ENCODE measurements at regions of chr10 and their contacts with region 1.

Region 1: DNA sequence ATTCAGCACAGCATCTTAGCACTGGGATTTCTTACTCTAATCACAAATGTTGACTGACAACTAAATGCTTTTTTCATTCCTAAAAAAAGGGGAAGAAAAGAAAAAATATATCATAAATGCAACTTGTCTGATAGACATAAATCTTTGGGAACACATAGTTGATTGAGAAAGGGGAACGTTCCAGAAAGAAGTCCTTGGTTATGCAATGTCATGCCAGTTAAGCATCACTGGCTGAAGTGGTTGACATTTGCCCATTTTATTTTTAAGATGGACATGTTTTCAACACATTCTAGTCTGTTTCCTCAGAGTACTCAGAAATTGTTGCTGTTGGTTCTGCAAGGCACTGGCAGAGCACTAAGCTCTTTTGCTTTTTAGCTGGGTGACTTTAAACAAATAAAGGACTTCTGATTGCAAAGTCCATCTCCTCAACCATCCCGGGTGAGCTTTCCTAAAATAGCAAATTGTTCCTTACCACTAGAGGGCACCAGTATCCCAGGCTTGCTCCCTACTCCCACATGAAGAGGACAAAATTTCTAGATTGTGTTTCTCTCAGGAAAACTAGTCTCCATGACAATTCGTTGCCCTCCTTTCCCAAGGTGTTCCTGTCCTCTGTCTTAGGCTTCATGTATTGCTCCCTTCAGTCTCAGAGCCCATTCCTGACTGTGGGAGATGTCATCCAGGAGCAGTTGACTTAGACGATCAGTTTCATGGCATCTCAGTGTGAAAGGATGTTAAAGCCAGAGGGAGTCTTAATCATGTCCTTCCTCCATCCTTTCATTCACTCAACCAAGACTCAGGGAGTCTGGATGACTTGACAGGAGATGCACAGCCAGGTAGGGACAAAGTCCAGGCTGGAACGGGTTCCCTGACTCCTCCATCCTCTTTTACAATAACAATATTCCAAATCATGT is 23.9 kb downstream of the OPALIN start:
- DNase-seq: peak; percentile 50
- H3K4me3 ChIP-seq: no peak overlapping the region
- H3K27ac ChIP-seq: no peak overlapping the region
- H3K4me1 ChIP-seq: no peaks in the 10 kb centered on the region
- H3K27me3 ChIP-seq: peaks cover 0 to 6% of the 10 kb centered on the region in 2 experiments
- CTCF ChIP-seq: peak; percentile 68 to 74
- POLR2A ChIP-seq: no peak

Region 2: GRCh38 chr10:96216775-96217174 is 118.1 kb before region 1 on chr10:
- CTCF ChIA-PET with region 1: no interaction called
- POLR2A ChIA-PET with region 1: no interaction called
- dilution Hi-C with region 1: no loop called
- intact Hi-C with region 1: no loop called
- DNase-seq: no peak
- H3K4me3 ChIP-seq: no peak overlapping the region
- H3K27ac ChIP-seq: no peak overlapping the region
- H3K4me1 ChIP-seq: no peaks in the 10 kb centered on the region
- H3K27me3 ChIP-seq: peaks cover 0 to 2% of the 10 kb centered on the region in 2 experiments
- CTCF ChIP-seq: no peak
- POLR2A ChIP-seq: no peak

Region 3: GRCh38 chr10:96301616-96302015 is 33.3 kb before region 1 on chr10:
- CTCF ChIA-PET with region 1: interaction called, 12 read pairs
- POLR2A ChIA-PET with region 1: no interaction called
- dilution Hi-C with region 1: no loop called
- intact Hi-C with region 1: no loop called
- DNase-seq: no peak
- H3K4me3 ChIP-seq: no peak overlapping the region
- H3K27ac ChIP-seq: no peak overlapping the region
- H3K4me1 ChIP-seq: no peaks in the 10 kb centered on the region
- H3K27me3 ChIP-seq: peaks cover 2 to 9% of the 10 kb centered on the region in 2 experiments
- CTCF ChIP-seq: no peak
- POLR2A ChIP-seq: no peak

Region 4: GRCh38 chr10:96324447-96324846 is 10.4 kb before region 1 on chr10:
- CTCF ChIA-PET with region 1: interaction called, 10 read pairs
- POLR2A ChIA-PET with region 1: no interaction called
- dilution Hi-C with region 1: no loop called
- intact Hi-C with region 1: no loop called
- DNase-seq: no peak
- H3K4me3 ChIP-seq: no peak overlapping the region
- H3K27ac ChIP-seq: no peak overlapping the region
- H3K4me1 ChIP-seq: no peaks in the 10 kb centered on the region
- H3K27me3 ChIP-seq: no peaks in the 10 kb centered on the region
- CTCF ChIP-seq: no peak
- POLR2A ChIP-seq: no peak

Region 5: DNA sequence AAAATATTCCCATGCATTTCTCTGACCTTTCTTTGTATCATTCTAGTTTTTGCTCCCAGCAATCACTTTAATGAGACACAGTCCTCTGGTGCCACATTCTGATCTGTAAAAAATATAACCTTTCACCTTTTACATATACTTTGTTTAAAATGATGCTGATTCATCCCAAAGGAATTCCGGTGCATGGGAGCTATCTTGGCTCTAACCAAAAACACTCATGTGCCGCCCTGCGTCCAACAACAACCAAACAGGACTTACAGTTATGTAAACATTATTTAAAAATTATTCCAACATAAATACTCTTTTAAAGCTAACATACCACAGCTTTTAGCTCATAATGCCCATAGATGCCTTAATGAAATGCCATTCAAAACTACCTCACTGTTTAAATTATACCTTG is 31.6 kb after region 1 on chr10:
- CTCF ChIA-PET with region 1: interaction called, 11 read pairs
- POLR2A ChIA-PET with region 1: no interaction called
- dilution Hi-C with region 1: no loop called
- intact Hi-C with region 1: loop called (anchors 1 kb)
- DNase-seq: peak; percentile 17
- H3K4me3 ChIP-seq: no peak overlapping the region
- H3K27ac ChIP-seq: no peak overlapping the region
- H3K4me1 ChIP-seq: peaks cover 10% of the 10 kb centered on the region
- H3K27me3 ChIP-seq: no peaks in the 10 kb centered on the region
- CTCF ChIP-seq: no peak
- POLR2A ChIP-seq: no peak

Measured in endothelial cell of umbilical vein (primary cell).